ENCODE measurements at regions of chr16 and their contacts with region 1.

Region 1: DNA sequence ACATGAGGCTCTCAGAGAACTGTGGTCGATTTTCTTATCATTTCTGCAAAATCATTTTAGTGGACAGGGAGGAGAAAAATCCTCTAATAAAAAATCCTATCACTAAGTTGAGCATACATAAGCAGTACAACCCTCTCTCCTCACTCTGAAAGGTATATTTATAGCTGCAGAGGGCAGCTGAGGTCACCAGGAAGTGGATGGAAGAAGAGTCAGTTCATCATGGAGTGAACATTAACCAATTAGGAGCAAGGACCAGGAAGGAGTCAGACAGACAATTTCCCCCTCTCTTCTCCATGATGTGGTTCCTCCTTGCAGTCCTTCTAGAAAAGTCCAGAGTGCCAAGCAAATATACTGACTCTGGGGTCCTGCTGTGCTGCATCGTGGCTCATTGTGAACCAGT is 253.7 kb downstream of the TOX3 start:
- DNase-seq: no peak
- H3K4me3 Mint-ChIP-seq: no peak overlapping the region
- H3K27ac Mint-ChIP-seq: no peak overlapping the region
- H3K4me1 Mint-ChIP-seq: peaks cover 49% of the 10 kb centered on the region
- H3K27me3 Mint-ChIP-seq: no peaks in the 10 kb centered on the region
- CTCF ChIP-seq: no peak

Region 2: GRCh38 chr16:52078716-52079655 is 214.2 kb before region 1 on chr16:
- CTCF ChIA-PET with region 1: no interaction called
- intact Hi-C with region 1: loop called (anchors 5 kb)
- DNase-seq: peak; percentile 41
- H3K4me3 Mint-ChIP-seq: peak overlapping the region; percentile 0
- H3K27ac Mint-ChIP-seq: peak overlapping the region; percentile 89
- H3K4me1 Mint-ChIP-seq: peaks cover 38% of the 10 kb centered on the region
- H3K27me3 Mint-ChIP-seq: no peaks in the 10 kb centered on the region
- CTCF ChIP-seq: no peak

Region 3: DNA sequence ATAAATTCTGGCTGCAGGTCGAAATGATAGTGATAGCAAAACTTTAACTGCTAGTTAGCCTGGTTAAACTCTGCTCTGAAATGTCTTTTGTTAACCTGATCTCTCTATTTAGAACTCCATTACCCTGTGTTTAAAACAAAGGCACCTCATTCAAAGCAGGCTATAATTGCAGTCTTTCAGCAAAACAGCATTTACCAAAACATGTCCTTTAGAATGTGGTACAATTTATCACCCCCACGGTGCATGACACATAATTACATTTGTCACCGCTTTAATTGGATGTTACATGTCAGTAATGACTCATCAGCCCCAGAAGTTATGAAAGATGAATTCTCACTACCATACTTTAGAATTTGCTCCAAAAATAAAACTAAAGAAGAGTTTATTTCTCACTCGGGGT is 41.7 kb before region 1 on chr16:
- CTCF ChIA-PET with region 1: interaction called, 3 read pairs
- intact Hi-C with region 1: loop called (anchors 5 kb)
- DNase-seq: no peak
- H3K4me3 Mint-ChIP-seq: no peak overlapping the region
- H3K27ac Mint-ChIP-seq: no peak overlapping the region
- H3K4me1 Mint-ChIP-seq: peaks cover 55% of the 10 kb centered on the region
- H3K27me3 Mint-ChIP-seq: no peaks in the 10 kb centered on the region
- CTCF ChIP-seq: no peak

Region 4: DNA sequence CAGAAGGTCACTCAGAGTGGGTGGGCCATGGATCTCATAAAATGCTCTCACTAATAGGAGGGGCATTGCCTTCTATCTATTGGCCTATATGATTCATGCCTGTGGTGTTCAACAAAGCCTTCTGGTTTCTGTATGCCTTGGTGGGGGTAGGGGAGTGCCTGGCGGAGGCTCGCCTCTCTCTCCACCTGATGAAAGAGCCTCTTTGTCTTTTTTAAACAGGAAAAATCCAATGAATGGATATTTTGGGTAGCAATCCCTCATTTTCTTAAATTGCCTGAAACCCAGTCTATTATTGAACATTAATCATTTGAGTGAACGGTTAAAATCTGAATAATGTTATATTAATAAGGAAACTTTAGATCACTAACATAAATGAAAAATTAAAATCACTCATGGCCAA is 163.2 kb after region 1 on chr16:
- CTCF ChIA-PET with region 1: no interaction called
- intact Hi-C with region 1: loop called (anchors 10 kb)
- DNase-seq: peak; percentile 87
- H3K4me3 Mint-ChIP-seq: peak overlapping the region; percentile 44
- H3K27ac Mint-ChIP-seq: peak overlapping the region; percentile 64
- H3K4me1 Mint-ChIP-seq: peaks cover 74% of the 10 kb centered on the region
- H3K27me3 Mint-ChIP-seq: no peaks in the 10 kb centered on the region
- CTCF ChIP-seq: no peak

Region 5: GRCh38 chr16:52528393-52529065 is 235.3 kb after region 1 on chr16:
- CTCF ChIA-PET with region 1: no interaction called
- intact Hi-C with region 1: no loop called
- DNase-seq: peak; percentile 39
- H3K4me3 Mint-ChIP-seq: no peak overlapping the region
- H3K27ac Mint-ChIP-seq: no peak overlapping the region
- H3K4me1 Mint-ChIP-seq: peaks cover 15% of the 10 kb centered on the region
- H3K27me3 Mint-ChIP-seq: no peaks in the 10 kb centered on the region
- CTCF ChIP-seq: no peak

Region 6: GRCh38 chr16:52561910-52562741 is 268.9 kb after region 1 on chr16:
- CTCF ChIA-PET with region 1: no interaction called
- intact Hi-C with region 1: loop called (anchors 5 kb)
- DNase-seq: no peak
- H3K4me3 Mint-ChIP-seq: no peak overlapping the region
- H3K27ac Mint-ChIP-seq: peak overlapping the region; percentile 2
- H3K4me1 Mint-ChIP-seq: peaks cover 90% of the 10 kb centered on the region
- H3K27me3 Mint-ChIP-seq: no peaks in the 10 kb centered on the region
- CTCF ChIP-seq: no peak